IMR-90 (cell line): ENCODE measurements at regions of chr6 and their contacts with region 1.

Region 1: DNA sequence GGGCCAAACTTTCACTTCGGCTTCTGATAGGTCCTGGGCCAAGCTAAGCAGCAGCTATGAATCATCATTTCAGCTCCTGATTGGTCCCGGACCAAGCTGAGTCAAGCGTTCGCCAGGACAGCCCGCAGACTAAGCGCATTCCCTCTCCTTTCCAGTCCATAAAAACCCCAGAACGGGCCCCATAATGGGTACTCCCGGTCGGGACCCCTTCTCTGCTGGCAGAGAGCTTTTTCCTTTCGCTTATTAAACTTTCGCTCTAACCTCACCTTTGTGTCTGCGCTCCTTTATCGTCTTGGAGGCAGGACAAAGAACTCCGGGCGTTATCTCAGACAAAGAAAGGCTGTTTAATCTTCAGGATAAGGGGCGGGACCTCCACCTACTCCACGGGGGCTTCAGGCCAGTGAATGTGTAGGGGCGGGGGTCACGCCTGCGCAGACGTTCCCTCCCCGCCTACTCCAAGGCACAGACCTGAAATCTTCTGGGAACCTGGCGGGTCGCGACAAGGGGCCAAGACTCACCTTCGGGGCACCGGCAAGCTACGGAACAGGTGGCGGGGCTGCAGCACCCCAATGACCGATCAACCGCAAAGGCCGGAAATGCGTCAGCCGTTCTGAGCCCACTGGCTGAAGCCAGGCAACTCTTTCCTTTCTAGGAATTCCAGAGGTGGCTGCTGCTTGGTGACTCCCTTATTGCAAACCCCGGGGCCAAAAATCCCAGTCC is at the start of gene ZSCAN31:
- DNase-seq: peak; percentile 99
- ATAC-seq: peak; percentile 96
- H3K4me3 ChIP-seq: peak within 1 kb of the TSS; percentile 63
- H3K27ac ChIP-seq: peak within 1 kb of the TSS; percentile 89
- H3K4me1 ChIP-seq: peaks cover 2% of the 10 kb centered on the region; the same call in 1 of the 2 replicates
- H3K27me3 ChIP-seq: no peaks in the 10 kb centered on the region
- CTCF ChIP-seq: no peak
- POLR2A ChIP-seq: peak; percentile 99
- RAD21 ChIP-seq: no peak
- total RNA-seq, gene ZSCAN31: 4.2 and 4.7 TPM in 2 replicates

Region 2: GRCh38 chr6:28080631-28081485 is 254.9 kb before region 1 on chr6:
- CTCF ChIA-PET with region 1: no interaction called
- POLR2A ChIA-PET with region 1: no interaction called
- dilution Hi-C with region 1: no loop called
- in situ Hi-C with region 1: no loop called
- intact Hi-C with region 1: loop called (anchors 5 kb)
- DNase-seq: peak; percentile 98
- ATAC-seq: peak; percentile 98
- H3K4me3 ChIP-seq: peak overlapping the region; percentile 75
- H3K27ac ChIP-seq: peak overlapping the region; percentile 83
- H3K4me1 ChIP-seq: peaks cover 2% of the 10 kb centered on the region; the same call in 1 of the 2 replicates
- H3K27me3 ChIP-seq: no peaks in the 10 kb centered on the region
- CTCF ChIP-seq: no peak
- POLR2A ChIP-seq: peak; percentile 14; the same call in 1 of the 2 replicates
- RAD21 ChIP-seq: no peak

Region 3: DNA sequence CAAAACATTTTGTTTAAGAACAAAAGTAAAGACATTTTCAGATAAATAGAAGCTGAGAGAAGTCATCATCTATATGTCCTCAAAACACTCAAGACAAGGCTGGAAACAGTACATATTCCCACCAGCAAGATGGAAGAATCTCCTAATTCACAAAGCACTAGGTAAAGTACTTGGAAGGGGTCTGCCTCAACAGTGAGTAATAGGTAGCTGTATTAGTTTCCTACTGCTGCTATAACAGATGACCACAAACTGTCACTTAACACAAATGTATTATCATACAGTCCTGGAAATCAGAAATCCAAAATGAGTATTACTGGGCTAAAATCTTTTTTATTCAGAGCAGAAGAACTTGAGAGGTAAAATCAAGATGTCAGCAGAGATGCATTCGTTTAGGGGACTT is 153.5 kb before region 1 on chr6:
- CTCF ChIA-PET with region 1: no interaction called
- POLR2A ChIA-PET with region 1: no interaction called
- dilution Hi-C with region 1: no loop called
- in situ Hi-C with region 1: no loop called
- intact Hi-C with region 1: no loop called
- DNase-seq: no peak
- ATAC-seq: no peak
- H3K4me3 ChIP-seq: no peak overlapping the region
- H3K27ac ChIP-seq: no peak overlapping the region
- H3K4me1 ChIP-seq: no peaks in the 10 kb centered on the region
- H3K27me3 ChIP-seq: no peaks in the 10 kb centered on the region
- CTCF ChIP-seq: no peak
- POLR2A ChIP-seq: no peak
- RAD21 ChIP-seq: no peak

Region 4: GRCh38 chr6:28266962-28267694 is 68.6 kb before region 1 on chr6 and contains the start of gene ZSCAN26:
- CTCF ChIA-PET with region 1: no interaction called
- POLR2A ChIA-PET with region 1: no interaction called
- dilution Hi-C with region 1: no loop called
- in situ Hi-C with region 1: no loop called
- intact Hi-C with region 1: loop called (anchors 5 kb)
- DNase-seq: peak; percentile 89
- ATAC-seq: peak; percentile 92
- H3K4me3 ChIP-seq: peak within 1 kb of the TSS; percentile 72
- H3K27ac ChIP-seq: peak within 1 kb of the TSS; percentile 95
- H3K4me1 ChIP-seq: no peaks in the 10 kb centered on the region
- H3K27me3 ChIP-seq: no peaks in the 10 kb centered on the region
- CTCF ChIP-seq: no peak
- POLR2A ChIP-seq: peak; percentile 59; the same call in 1 of the 2 replicates
- RAD21 ChIP-seq: no peak
- total RNA-seq, gene ZSCAN26: 22.8 and 42.1 TPM in 2 replicates

Region 5: DNA sequence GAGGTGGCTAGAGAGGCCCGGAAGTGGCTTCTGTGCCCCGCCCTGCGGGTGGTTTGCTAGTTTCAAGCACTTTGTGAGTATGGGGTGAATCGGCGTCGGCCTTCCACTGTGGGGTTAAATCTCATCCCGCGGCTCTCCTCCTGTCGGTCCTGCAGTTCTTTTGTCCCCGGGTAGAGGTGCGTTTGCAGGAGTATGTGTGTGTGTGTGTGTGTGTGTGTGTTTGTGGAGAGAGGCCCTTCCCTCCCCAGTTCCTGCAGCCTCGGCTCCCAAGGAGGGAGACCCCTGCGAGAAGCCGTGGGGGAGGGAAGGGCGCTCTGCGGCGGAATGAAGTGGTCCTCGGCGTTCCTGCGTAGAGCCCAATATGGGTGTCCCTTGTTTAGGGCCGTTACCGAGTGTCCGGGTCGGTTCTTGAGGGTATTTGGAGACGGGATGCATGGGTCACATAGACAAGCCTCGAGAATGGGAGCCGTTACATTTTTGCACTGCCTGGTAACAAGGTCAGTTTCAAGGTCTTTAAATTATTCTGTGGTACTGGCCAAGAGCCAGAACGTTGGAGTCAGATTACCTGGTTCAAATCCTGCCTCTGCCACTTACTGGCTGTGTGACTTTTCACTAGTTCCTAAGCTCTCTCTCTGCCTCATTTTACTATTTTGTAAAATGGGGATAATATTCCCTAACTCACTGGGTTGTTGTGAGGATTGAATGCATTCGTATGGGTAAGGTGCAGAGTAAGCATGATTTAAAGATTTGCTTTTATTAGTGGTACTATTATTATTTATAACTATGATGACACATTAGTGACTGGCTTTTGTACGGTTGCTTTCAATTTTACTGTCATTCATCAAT is 14.4 kb after region 1 on chr6 and contains the start of gene ZKSCAN3:
- CTCF ChIA-PET with region 1: interaction called, 9 read pairs
- POLR2A ChIA-PET with region 1: no interaction called
- dilution Hi-C with region 1: no loop called
- in situ Hi-C with region 1: no loop called
- intact Hi-C with region 1: loop called (anchors 1 kb)
- DNase-seq: peak; percentile 73
- ATAC-seq: peak; percentile 100
- H3K4me3 ChIP-seq: peak within 1 kb of the TSS; percentile 99
- H3K27ac ChIP-seq: peak within 1 kb of the TSS; percentile 96
- H3K4me1 ChIP-seq: peaks cover 5% of the 10 kb centered on the region
- H3K27me3 ChIP-seq: peaks cover 15% of the 10 kb centered on the region
- CTCF ChIP-seq: no peak
- POLR2A ChIP-seq: no peak
- RAD21 ChIP-seq: no peak; the same call in 1 of the 2 replicates
- total RNA-seq, gene ZKSCAN3: 4.4 and 4.8 TPM in 2 replicates